K562 (cell line): ENCODE measurements at regions of chr11 and their contacts with region 1.

Region 1: DNA sequence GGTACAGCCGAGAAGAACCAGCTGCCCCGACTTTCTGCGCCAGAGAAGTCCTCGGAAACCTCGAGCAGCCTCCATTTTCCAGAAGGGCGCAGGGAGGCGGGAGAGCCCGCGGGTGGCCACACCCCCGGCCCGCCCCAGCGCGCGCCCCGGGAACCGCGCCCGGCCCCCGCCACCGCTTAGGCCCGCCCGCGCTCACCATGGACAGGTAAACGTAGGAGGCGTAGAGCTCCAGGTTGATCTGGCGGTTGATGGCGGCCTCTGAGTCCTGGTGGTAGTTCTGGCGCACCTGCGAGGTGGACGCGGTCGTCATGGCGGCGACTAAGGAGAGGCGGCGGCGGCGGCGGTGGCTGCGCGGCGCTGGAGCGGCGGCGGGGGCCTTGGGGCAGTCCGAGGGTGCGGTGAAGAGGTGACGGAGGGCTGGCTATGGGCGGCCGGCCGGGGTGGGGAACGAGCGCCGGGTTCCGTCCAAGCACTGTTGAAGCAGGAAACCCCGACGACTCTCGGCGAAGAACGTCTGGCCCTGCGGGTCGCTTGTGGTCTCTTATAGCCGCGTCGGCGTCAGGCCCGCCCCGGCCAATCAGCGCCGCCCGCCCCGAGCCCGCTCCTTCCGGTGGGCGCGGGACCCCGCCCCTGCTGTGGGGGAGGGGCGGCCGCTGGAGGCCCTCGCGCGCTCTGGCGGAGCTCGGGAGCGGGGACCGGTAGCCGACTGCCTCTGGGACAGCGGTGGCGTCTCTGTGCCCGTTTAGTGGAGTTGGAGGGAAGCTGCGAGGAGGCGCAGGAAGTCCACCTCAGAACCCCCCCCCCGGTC is at the start of gene FTH1:
- DNase-seq: peak; percentile 90 to 96 (median 92)
- ATAC-seq: peak; percentile 57
- H3K4me3 ChIP-seq: peak within 1 kb of the TSS; percentile 80
- H3K27ac ChIP-seq: peak within 1 kb of the TSS; percentile 89
- H3K4me1 ChIP-seq: peaks cover 46 to 52% of the 10 kb centered on the region in 2 experiments
- H3K27me3 ChIP-seq: no peaks in the 10 kb centered on the region
- CTCF ChIP-seq: no peak
- EP300 ChIP-seq: peak; percentile 54
- POLR2A ChIP-seq: peak; percentile 99
- RAD21 ChIP-seq: peak; percentile 15 to 28; a peak in 1 of 4 replicates
- polyA plus RNA-seq, gene FTH1: 370 to 426 TPM

Region 2: DNA sequence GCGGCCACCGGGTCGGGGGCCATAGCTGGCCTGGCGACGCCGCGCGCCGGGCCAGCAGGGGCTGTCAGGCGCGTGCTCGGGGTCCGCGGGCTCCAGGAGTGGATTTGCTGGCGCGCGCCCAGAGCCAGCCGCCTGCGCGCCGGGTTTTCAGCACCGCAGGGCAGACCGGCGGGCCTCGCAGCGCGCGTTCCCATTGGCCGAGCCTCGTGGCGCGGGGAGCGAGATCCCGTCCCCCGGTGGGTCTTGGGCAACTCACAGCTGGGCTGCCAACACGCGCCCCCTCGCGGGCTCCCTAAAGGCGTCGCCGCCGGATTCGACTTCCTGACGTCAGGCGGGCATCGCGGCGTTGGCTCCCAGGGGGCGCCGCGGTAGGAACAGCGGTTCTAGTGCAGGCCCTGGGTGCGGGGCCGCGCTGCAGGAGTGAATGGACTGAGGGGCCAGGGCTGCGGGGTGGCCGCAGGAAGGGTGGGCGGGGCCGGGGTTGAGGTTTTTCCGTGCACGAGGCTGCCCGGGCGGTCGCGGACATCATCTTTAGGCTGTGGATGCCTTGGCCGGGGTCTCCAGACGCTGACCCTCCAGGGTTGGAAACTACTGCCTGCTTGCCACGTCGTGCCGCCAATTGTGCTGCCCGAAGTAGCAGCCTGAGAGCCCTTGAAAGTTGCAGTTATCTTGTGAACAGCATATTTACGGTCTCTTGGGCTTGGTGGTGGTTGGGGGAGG is 150.4 kb before region 1 on chr11 and contains the start of gene FADS1:
- CTCF ChIA-PET with region 1: no interaction called
- POLR2A ChIA-PET with region 1: interaction called, 9 read pairs
- in situ Hi-C with region 1: no loop called
- intact Hi-C with region 1: loop called (anchors 1 kb)
- DNase-seq: peak; percentile 95 to 97 (median 96)
- ATAC-seq: peak; percentile 71
- H3K4me3 ChIP-seq: peak within 1 kb of the TSS; percentile 64
- H3K27ac ChIP-seq: peak within 1 kb of the TSS; percentile 98
- H3K4me1 ChIP-seq: peaks cover 38 to 49% of the 10 kb centered on the region in 2 experiments; a peak in 4 of 5 replicates
- H3K27me3 ChIP-seq: no peaks in the 10 kb centered on the region; a peak in 1 of 5 replicates
- CTCF ChIP-seq: peak; percentile 72 to 93 (median 89)
- EP300 ChIP-seq: peak; percentile 42; the same call in 1 of the 2 replicates
- POLR2A ChIP-seq: no peak; the same call in 1 of the 2 replicates
- RAD21 ChIP-seq: peak; percentile 60; a peak in 3 of 4 replicates
- polyA plus RNA-seq, gene FADS1: 110 to 174 TPM

Region 3: GRCh38 chr11:61947486-61948210 is 19.7 kb before region 1 on chr11:
- CTCF ChIA-PET with region 1: no interaction called
- POLR2A ChIA-PET with region 1: interaction called, 327 read pairs
- in situ Hi-C with region 1: no loop called
- intact Hi-C with region 1: loop called (anchors 2 kb)
- DNase-seq: peak; percentile 80 to 86 (median 82)
- ATAC-seq: peak; percentile 67
- H3K4me3 ChIP-seq: no peak overlapping the region
- H3K27ac ChIP-seq: no peak overlapping the region; the same call in 2 of the 3 replicates
- H3K4me1 ChIP-seq: peaks cover 20 to 27% of the 10 kb centered on the region in 2 experiments; a peak in 4 of 5 replicates
- H3K27me3 ChIP-seq: no peaks in the 10 kb centered on the region
- CTCF ChIP-seq: peak; percentile 98 to 99 (median 98)
- EP300 ChIP-seq: no peak
- POLR2A ChIP-seq: no peak
- RAD21 ChIP-seq: peak; percentile 99

Region 4: DNA sequence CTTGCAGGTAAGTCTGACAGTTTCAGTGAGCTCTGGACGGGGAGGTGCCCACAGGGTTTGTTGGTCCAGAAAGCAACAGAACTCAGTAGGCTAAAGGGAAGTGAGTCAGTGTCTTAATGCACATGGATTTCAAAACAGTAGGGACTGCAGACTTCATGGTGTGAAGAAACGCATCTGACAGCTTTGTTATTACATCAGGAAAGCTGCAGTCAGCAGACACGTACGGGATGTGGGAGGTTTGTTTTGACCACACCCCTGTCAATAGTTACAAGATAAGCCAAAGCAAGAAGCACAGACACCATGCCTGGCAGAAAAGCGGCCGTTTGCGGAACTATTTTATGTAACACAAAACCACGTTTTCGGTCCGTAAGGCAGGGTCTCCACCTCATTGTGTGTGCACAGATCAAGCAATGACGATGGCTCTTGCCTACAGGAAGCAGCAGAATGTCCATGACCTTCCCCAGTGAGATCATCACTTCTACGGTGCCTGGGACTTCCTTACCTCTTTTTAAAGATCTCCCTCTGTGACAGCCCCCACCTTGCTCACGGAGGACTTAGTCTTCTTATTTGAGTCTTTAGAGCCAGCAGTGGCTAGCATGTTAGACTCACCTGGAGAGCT is 58.3 kb after region 1 on chr11:
- CTCF ChIA-PET with region 1: no interaction called
- POLR2A ChIA-PET with region 1: interaction called, 51 read pairs
- in situ Hi-C with region 1: loop called (anchors 5 kb)
- intact Hi-C with region 1: loop called (anchors 1 kb)
- DNase-seq: peak; percentile 83 to 93 (median 86)
- ATAC-seq: peak; percentile 94
- H3K4me3 ChIP-seq: peak overlapping the region; percentile 8; the same call in 1 of the 2 replicates
- H3K27ac ChIP-seq: peak overlapping the region; percentile 84
- H3K4me1 ChIP-seq: peaks cover 10 to 14% of the 10 kb centered on the region in 2 experiments
- H3K27me3 ChIP-seq: no peaks in the 10 kb centered on the region
- CTCF ChIP-seq: no peak; a peak in 1 of 6 replicates
- EP300 ChIP-seq: peak; percentile 96
- POLR2A ChIP-seq: no peak
- RAD21 ChIP-seq: peak; percentile 31 to 44

Region 5: DNA sequence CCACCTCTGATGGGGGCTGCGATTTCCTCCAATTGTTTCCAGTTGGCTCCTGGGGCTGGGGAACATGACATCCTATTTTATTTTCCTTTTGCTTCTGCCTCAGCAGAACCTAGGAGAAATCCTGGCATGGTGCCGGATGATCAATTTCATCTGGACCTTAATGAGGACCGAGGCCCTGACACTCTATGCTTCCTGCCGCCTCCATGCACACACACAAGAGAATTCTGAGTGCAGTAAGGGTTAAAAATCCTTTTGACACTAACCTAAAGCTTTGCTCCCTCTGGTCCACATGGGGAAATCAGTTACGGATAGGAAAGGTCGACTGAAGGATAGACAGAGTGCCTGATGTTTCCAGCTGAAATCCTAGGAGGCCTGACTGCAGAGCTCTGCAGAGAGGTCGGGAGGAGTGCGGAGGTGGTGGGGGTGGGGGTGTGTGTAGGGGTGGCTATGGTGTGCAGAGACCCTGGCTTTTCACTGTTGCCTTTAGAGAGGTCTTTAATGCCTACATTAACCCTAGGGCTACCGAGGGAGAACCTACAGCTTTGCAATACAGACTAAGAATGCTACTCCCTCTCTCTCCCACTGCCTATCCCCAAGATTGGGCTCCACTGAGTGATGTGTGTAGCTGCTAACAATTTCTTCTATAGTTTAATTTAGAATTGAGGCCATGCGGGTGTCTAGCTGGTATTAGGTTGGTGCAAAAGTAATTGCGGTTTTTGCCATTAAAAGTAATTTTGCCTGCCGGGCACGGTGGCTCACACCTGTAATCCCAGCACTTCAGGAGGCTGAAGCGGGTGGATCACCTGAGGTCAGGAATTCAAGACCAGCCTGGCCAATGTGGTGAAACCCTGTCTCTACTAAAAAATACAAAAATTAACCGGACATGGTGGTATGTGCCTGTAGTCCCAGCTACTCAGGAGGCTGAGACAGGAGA is 102.9 kb after region 1 on chr11:
- CTCF ChIA-PET with region 1: no interaction called
- POLR2A ChIA-PET with region 1: interaction called, 11 read pairs
- in situ Hi-C with region 1: no loop called
- intact Hi-C with region 1: no loop called
- DNase-seq: no peak
- ATAC-seq: peak; percentile 55; the same call in 2 of the 3 replicates
- H3K4me3 ChIP-seq: no peak overlapping the region
- H3K27ac ChIP-seq: no peak overlapping the region
- H3K4me1 ChIP-seq: no peaks in the 10 kb centered on the region
- H3K27me3 ChIP-seq: no peaks in the 10 kb centered on the region
- CTCF ChIP-seq: no peak
- EP300 ChIP-seq: no peak
- POLR2A ChIP-seq: no peak
- RAD21 ChIP-seq: no peak

Region 6: DNA sequence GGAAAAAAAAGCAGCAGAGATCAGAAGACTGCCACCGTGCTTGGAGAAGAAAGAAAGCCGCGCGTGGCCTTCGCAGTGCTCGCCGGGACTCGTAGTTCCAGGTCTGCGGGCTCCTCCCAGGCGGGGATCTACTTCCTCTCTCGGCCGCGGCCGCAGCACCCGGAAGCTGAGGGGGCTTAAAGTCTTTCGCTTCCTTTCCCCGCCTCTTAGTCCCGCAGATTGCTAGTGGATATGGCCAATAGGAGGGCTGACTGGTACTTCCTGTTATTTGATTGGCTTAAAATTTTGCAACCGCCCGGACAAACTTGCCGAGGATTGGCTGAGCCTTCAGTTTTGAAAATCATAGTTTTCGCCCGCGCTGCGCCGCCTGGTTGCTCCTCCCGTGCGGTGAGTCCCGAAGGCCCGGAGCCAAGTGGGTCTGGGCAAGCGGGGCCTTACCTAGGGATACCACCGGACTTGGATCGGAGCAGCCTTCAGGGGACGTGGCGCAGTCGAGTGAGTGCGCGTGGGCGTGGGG is 156.4 kb after region 1 on chr11 and contains the start of gene INCENP:
- CTCF ChIA-PET with region 1: no interaction called
- POLR2A ChIA-PET with region 1: interaction called, 22 read pairs
- in situ Hi-C with region 1: no loop called
- intact Hi-C with region 1: no loop called
- DNase-seq: peak; percentile 95 to 99 (median 97)
- ATAC-seq: peak; percentile 99
- H3K4me3 ChIP-seq: peak within 1 kb of the TSS; percentile 85
- H3K27ac ChIP-seq: peak within 1 kb of the TSS; percentile 93
- H3K4me1 ChIP-seq: peaks cover 11 to 16% of the 10 kb centered on the region in 2 experiments; a peak in 4 of 5 replicates
- H3K27me3 ChIP-seq: no peaks in the 10 kb centered on the region
- CTCF ChIP-seq: no peak
- EP300 ChIP-seq: no peak
- POLR2A ChIP-seq: peak; percentile 80
- RAD21 ChIP-seq: no peak
- polyA plus RNA-seq, gene INCENP: 1.1 to 3.3 TPM